Activated CD4-positive, alpha-beta T cell treated with anti-CD3 and anti-CD28 coated beads, Interleukin-2, amount 10 ng/mL, durations not matched to agents 7 days and 5 days (primary cell): ENCODE measurements at regions of chr20 and their contacts with region 1.

Region 1: DNA sequence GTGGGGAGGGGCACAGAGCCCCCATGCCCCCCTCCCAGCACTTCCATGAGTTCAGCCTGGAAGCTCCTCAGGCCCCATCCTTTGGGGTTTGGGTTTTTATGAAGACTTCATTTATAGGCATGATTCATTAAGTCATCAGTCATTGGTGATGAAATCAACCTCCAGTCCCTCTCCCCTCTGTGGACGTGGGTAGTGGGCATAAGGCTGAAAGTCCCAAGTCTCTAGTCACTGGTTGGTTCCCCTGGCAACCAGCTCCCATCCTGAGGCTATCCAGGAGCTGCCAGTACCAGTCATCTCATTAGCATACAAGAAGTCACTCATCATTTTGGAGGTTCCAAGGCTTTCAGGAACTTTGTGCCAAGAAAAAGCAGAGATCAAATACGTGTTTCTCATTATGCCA is 9.2 kb downstream of the TGM3 start:
- DNase-seq: no peak
- H3K4me3 Mint-ChIP-seq: no peak overlapping the region
- H3K27ac Mint-ChIP-seq: no peak overlapping the region
- H3K4me1 Mint-ChIP-seq: no peaks in the 10 kb centered on the region
- H3K27me3 Mint-ChIP-seq: peaks cover 7% of the 10 kb centered on the region

Region 2: DNA sequence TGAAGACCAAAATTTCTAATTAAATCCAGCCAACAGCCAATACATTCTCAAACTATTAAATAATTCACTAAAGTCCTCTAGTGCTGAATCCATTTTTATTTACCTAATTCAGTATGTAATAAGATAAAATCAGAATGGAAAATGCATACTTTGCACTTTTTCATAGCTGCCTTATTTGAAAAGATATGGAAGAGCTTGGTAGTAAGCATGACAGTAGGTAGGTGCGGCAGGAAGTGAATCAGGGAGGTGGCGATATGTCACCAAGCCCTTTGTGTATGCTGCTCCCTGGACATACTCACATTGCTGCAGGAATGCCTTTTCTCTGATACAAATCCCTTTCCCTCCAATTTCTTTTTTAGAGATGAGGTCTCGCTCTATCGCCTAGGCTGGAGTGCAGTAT is 19.4 kb before region 1 on chr20:
- CTCF ChIA-PET with region 1: interaction called, 4 read pairs
- POLR2A ChIA-PET with region 1: interaction called, 11 read pairs
- DNase-seq: no peak
- H3K4me3 Mint-ChIP-seq: no peak overlapping the region
- H3K27ac Mint-ChIP-seq: no peak overlapping the region
- H3K4me1 Mint-ChIP-seq: peaks cover 7% of the 10 kb centered on the region
- H3K27me3 Mint-ChIP-seq: peaks cover 3% of the 10 kb centered on the region

Region 3: DNA sequence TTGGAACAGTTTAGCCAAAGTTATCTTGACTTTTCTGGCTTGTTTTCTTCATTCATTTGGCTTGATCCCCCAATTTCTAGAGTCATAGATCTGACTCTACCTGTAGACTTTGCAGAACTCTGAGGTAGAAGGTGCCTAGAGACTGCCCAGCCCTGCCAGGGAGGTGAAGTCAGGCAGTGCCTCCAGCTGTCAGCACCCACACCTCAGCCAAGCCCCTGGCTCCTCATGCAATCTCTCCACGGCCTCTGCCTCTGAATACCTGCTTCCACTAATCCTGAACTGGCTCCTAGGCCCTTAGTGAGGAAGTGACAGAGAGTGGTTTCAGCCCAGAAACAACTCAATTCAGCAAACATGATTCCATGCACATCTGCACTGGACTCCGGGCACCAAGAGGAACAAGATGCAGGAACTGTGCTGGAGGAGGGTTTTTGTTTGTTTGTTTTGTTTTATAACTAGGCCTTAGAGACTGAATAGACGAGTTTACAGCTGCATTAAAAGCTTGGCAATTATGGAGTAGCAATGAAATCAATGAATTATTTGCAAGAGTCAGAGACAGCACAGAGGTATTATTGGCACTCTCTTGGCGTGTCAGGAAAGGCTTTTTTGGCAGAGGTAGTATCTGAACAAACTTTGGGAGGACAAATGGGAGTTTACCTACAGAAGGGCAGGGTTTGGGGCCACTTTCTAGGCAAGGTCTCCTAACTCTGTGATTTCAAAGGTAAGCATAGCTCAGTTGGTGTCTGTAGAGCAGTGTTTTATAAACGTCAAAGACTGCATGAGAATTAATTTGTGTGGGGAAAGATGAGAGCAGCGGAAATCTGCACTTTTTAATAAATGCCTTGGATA is 16.0 kb after region 1 on chr20:
- CTCF ChIA-PET with region 1: no interaction called
- POLR2A ChIA-PET with region 1: no interaction called
- DNase-seq: no peak
- H3K4me3 Mint-ChIP-seq: no peak overlapping the region
- H3K27ac Mint-ChIP-seq: no peak overlapping the region
- H3K4me1 Mint-ChIP-seq: no peaks in the 10 kb centered on the region
- H3K27me3 Mint-ChIP-seq: peaks cover 30% of the 10 kb centered on the region

Region 4: DNA sequence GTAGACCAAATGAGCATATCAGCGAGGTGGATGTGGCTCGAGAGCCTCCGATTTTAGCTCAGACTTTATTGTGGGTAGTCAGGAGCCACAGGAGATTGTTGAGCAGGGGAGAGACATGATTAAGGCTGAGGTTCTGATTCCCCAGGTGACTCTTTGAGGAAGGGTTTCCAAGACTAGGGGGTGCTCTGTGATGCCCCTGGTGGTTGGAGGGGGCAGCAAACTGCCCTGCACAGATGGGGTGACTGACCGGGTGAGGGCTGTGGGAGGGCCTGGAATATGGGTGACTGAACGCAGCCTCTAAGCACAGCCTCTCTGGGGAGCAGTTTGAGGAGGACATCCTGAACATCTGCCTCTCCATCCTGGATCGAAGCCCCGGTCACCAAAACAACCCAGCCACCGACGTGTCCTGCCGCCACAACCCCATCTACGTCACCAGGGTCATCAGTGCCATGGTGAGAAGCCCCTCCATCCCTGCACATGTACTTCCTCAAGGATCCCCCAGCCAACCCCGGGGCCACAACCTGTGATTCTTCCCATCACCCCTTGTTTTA is 92.6 kb after region 1 on chr20:
- CTCF ChIA-PET with region 1: no interaction called
- POLR2A ChIA-PET with region 1: no interaction called
- DNase-seq: no peak
- H3K4me3 Mint-ChIP-seq: no peak overlapping the region
- H3K27ac Mint-ChIP-seq: no peak overlapping the region
- H3K4me1 Mint-ChIP-seq: no peaks in the 10 kb centered on the region
- H3K27me3 Mint-ChIP-seq: no peaks in the 10 kb centered on the region